PC-9 (cell line): ENCODE measurements at regions of chr14 and their contacts with region 1.

Region 1: DNA sequence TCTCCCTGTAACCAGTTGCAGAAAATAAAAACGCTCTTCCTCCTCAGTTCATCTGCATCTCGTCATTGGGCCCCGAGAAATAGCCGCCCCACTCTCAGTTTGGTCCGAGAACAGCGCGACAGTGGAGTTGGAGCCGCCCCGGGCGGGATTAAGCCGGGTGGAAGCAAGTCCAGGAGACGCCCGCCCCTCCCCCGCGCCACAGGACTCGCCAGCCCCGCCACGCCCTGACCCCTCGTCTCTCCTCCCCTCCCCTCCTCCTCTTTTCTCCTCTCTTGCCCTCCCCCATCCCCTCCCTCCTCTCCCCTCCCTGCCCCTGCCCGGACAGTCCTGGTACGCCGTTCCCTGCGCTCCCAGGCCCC is 83.7 kb downstream of the TNFAIP2 start:
- DNase-seq: peak; percentile 88 to 98
- H3K4me3 ChIP-seq: peak overlapping the region; percentile 58
- H3K27ac ChIP-seq: peak overlapping the region; percentile 83
- H3K4me1 ChIP-seq: peaks cover 42% of the 10 kb centered on the region
- H3K27me3 ChIP-seq: no peaks in the 10 kb centered on the region
- CTCF ChIP-seq: no peak

Region 2: DNA sequence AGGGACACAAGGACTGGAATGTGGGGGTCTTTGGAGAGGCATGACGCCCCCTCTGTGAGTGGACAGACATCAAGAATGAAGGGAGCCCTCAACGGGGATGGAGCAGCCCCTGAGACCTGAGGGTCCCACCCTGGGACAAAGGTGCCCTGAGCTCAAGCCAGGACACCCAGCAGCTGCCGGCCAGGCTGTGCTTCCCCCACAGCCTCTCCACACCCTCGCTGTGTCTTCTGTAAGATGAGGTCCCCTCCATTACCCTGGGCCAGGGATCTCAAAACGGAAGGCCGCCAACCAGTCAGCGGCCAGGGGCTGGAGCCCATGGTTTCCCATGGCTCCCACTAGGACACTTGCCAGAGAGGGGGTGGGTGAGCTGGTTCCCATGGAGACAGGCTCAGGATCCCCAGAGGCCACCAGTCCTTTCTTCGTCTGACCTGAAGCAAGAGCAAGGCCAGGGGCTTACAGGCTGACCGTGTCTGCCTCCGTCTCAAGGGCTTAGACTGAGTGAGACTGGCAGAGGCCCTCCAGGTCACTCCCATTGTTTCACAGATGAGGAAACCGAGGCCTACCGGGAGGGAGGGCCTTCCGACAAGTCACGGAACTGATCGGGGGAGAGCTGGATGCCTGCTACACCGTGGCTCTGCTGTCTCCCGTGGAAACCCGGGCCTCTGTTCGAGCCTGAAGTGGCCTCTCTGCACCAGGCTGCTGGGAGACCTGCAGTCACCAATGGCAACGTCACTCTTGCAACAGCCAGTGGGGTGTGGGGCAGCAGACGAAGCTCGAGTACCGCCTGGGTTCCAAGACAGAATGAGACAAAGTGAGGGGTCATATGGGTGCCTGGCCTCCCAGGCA is 1737.4 kb before region 1 on chr14:
- CTCF ChIA-PET with region 1: no interaction called
- POLR2A ChIA-PET with region 1: interaction called, 10 read pairs
- intact Hi-C with region 1: no loop called
- DNase-seq: no peak
- H3K4me3 ChIP-seq: no peak overlapping the region
- H3K27ac ChIP-seq: no peak overlapping the region
- H3K4me1 ChIP-seq: peaks cover 2% of the 10 kb centered on the region
- H3K27me3 ChIP-seq: no peaks in the 10 kb centered on the region
- CTCF ChIP-seq: no peak

Region 3: GRCh38 chr14:103141119-103141796 is 65.8 kb before region 1 on chr14:
- CTCF ChIA-PET with region 1: interaction called, 9 read pairs
- POLR2A ChIA-PET with region 1: no interaction called
- intact Hi-C with region 1: loop called (anchors 1 kb)
- DNase-seq: peak; percentile 78 to 84
- H3K4me3 ChIP-seq: no peak overlapping the region
- H3K27ac ChIP-seq: 0 out of 2 replicates have a peak overlapping the region, but pooled peaks have one; percentile 30
- H3K4me1 ChIP-seq: peaks cover 59% of the 10 kb centered on the region
- H3K27me3 ChIP-seq: no peaks in the 10 kb centered on the region
- CTCF ChIP-seq: peak; percentile 99

Region 4: DNA sequence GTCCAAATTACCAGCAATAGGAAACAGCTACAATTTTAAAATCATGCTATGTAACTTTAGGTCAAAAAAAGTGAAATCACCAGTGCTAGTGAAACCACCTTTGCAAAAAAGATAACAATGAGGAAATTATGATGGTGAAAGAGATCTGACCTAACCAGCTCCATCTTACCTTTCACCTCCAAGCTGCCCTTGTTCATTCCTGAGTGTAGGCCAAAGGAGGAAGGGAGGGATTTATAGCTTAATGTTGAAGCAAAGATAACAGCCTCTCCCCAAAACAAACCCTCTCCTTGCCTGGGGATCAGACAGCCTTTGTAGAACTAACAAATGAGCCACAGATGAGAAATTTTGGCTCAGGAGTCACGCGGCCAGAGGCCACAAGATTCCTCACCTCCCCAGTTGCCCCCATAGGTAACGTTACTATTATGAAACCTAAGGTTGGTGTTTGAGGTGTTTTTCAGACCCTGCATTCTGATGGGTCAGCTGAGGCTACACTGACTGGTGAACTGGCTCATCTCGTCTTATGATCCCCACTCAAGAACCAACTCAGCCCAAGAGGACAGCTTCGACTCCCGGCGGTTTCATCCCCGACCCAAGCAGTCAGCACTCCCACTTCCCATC is 44.0 kb after region 1 on chr14:
- CTCF ChIA-PET with region 1: interaction called, 3 read pairs
- POLR2A ChIA-PET with region 1: interaction called, 3 read pairs
- intact Hi-C with region 1: loop called (anchors 2 kb)
- DNase-seq: peak; percentile 36 to 100
- H3K4me3 ChIP-seq: peak overlapping the region; percentile 4; the same call in 1 of the 2 replicates
- H3K27ac ChIP-seq: peak overlapping the region; percentile 80
- H3K4me1 ChIP-seq: peaks cover 94% of the 10 kb centered on the region
- H3K27me3 ChIP-seq: no peaks in the 10 kb centered on the region
- CTCF ChIP-seq: no peak

Region 5: GRCh38 chr14:103281496-103282231 is 74.7 kb after region 1 on chr14:
- CTCF ChIA-PET with region 1: interaction called, 6 read pairs
- POLR2A ChIA-PET with region 1: interaction called, 40 read pairs
- intact Hi-C with region 1: loop called (anchors 1 kb)
- DNase-seq: peak; percentile 64 to 77
- H3K4me3 ChIP-seq: no peak overlapping the region
- H3K27ac ChIP-seq: no peak overlapping the region
- H3K4me1 ChIP-seq: peaks cover 49% of the 10 kb centered on the region
- H3K27me3 ChIP-seq: no peaks in the 10 kb centered on the region
- CTCF ChIP-seq: peak; percentile 82